Activated CD8-positive, alpha-beta T cell treated with anti-CD3 and anti-CD28 coated beads, Interleukin-2, amount 10 ng/mL, durations not matched to agents 7 days and 5 days (primary cell): ENCODE measurements at regions of chr1 and their contacts with region 1.

Region 1: DNA sequence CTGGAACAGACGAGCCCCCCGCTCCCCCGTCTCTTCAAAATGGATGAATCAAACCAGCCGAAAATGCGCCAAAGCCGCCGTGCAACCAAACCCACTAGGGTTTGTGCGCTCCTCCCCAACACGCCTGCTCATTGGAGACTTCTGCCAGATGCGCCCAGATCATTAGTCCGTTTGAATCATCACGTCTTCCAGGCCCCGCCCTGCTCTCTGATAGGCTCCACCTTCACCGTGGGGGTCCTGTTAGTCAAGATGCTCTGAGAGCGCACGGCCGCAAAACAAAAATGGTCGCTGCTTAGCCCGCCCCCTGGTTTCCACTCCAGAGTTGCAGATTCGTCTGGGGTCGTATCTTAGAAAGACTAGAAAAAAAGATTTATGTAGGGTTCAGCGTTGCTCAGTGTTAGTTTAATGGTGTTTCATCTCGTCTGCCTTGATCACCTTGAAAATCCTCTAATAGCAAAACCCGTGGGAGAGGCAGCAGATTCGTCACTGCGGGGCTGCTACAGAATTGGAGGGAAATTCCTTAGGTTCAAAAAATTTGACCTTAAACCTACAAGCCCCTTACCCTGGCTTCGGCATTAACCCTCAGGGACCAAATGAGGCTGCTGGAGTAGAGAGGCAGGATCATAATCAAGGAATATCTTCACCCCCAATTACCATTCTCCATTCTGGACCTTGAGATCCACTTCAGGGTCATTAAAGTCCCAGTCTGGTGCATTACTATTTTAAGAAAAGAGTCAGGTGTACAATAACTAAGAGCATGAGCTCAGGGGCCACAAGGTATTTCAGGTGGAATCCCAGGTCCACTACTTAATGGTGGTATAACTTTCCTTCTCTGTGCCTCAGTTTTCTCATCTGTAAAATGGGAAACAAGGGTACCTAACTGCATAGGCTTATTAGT is at the start of gene NUCKS1:
- DNase-seq: peak; percentile 98
- ATAC-seq: peak; percentile 89
- H3K4me3 Mint-ChIP-seq: peak within 1 kb of the TSS; percentile 98
- H3K27ac Mint-ChIP-seq: peak within 1 kb of the TSS; percentile 98
- H3K4me1 Mint-ChIP-seq: peaks cover 37% of the 10 kb centered on the region
- H3K27me3 Mint-ChIP-seq: peaks cover 2% of the 10 kb centered on the region
- total RNA-seq, gene NUCKS1: 236 to 237 TPM

Region 2: GRCh38 chr1:205775015-205775716 is 24.8 kb after region 1 on chr1 and contains the start of gene RAB29:
- CTCF ChIA-PET with region 1: interaction called, 8 read pairs
- POLR2A ChIA-PET with region 1: interaction called, 26 read pairs
- DNase-seq: peak; percentile 92
- ATAC-seq: peak; percentile 88
- H3K4me3 Mint-ChIP-seq: peak within 1 kb of the TSS; percentile 97
- H3K27ac Mint-ChIP-seq: peak within 1 kb of the TSS; percentile 92
- H3K4me1 Mint-ChIP-seq: peaks cover 56% of the 10 kb centered on the region
- H3K27me3 Mint-ChIP-seq: no peaks in the 10 kb centered on the region
- total RNA-seq, gene RAB29: 42.5 to 42.7 TPM

Region 3: DNA sequence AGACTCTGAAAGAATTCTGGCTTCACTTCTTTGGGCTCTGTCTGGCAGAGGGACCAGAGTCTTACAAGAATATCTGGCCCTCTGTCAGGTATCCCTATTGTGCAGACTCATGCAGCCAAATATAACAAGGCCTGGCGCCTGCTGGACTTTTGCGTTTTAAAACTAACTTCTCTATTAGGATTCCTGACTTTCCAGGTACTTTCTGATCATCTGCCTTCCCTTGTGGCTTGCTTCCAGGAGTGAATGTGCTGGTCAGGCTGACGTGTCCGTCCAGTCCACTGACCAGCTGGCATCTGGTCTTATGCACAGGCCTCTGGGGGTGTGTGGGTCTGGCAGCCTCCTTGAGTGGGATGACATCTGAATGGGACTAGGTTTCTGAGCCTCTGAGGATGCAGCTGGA is 33.5 kb after region 1 on chr1:
- CTCF ChIA-PET with region 1: interaction called, 12 read pairs
- POLR2A ChIA-PET with region 1: interaction called, 8 read pairs
- DNase-seq: no peak
- ATAC-seq: no peak
- H3K4me3 Mint-ChIP-seq: no peak overlapping the region
- H3K27ac Mint-ChIP-seq: no peak overlapping the region
- H3K4me1 Mint-ChIP-seq: peaks cover 16% of the 10 kb centered on the region
- H3K27me3 Mint-ChIP-seq: no peaks in the 10 kb centered on the region

Region 4: GRCh38 chr1:205805082-205805712 is 54.8 kb after region 1 on chr1:
- CTCF ChIA-PET with region 1: no interaction called
- POLR2A ChIA-PET with region 1: no interaction called
- DNase-seq: peak; percentile 30
- ATAC-seq: peak; percentile 47
- H3K4me3 Mint-ChIP-seq: peak overlapping the region; percentile 23
- H3K27ac Mint-ChIP-seq: peak overlapping the region; percentile 70
- H3K4me1 Mint-ChIP-seq: peaks cover 38% of the 10 kb centered on the region
- H3K27me3 Mint-ChIP-seq: no peaks in the 10 kb centered on the region